ENCODE measurements at regions of chr1 and their contacts with region 1.

Region 1: DNA sequence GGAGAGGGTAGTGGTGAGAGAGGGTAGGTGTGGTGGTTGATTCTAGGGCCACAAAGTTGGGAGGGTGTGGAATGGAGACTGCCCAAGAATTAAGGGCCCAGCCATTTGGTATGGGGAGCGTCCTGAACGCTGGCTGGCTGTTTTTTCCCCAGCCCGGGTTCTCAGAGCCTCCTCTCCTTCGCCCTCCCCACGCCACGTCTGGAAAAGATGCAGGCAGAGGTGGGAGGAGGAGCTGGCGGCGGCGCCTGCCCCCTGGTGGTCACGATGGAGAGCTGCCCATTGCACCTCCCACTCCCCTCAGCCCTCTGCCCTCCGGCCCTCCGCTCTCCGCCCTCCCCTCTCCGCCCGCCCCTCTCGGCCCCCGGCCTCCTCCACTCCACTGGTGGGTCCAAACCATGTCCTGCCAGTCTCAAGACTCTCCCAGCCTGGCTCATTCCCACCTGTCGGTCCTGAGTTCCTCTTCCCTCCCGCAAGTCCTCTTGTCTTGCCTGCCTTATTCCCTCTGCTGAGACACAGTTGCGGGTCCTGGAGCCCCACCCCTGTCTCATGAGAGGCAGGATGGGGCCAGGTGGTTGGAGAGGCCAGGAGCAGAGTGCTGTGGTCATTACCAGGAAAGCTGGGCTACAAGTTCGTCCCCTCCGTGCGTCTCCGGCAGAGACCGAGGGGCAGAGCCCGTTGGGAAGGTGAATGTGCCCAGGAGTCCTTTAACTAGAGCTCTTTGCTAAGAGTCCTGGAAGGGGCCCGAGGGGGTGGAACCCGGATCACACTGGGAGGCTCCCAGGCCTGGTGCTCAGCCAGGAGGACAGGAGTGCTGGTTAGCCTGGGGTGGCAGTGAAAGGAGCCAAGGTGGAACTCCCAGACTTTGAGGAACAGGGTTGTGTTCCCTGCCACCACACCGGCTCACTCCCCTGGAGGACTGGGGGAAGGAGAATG is 22.6 kb downstream of the ETNK2 start:
- DNase-seq: peak; percentile 31
- H3K4me3 ChIP-seq: peak overlapping the region; percentile 18 to 45 (median 31)
- H3K27ac ChIP-seq: no peak overlapping the region
- H3K4me1 ChIP-seq: peaks cover 35% of the 10 kb centered on the region
- H3K27me3 ChIP-seq: no peaks in the 10 kb centered on the region
- CTCF ChIP-seq: peak; percentile 66 to 87

Region 2: GRCh38 chr1:203861379-203862184 is 267.6 kb before region 1 on chr1 and contains the start of gene SNRPE:
- CTCF ChIA-PET with region 1: interaction called, 19 read pairs
- dilution Hi-C with region 1: no loop called
- in situ Hi-C with region 1: no loop called
- intact Hi-C with region 1: loop called (anchors 1 kb)
- DNase-seq: peak; percentile 97
- H3K4me3 ChIP-seq: peak within 1 kb of the TSS; percentile 59 to 92 (median 74)
- H3K27ac ChIP-seq: peak within 1 kb of the TSS; percentile 82
- H3K4me1 ChIP-seq: peaks cover 22% of the 10 kb centered on the region
- H3K27me3 ChIP-seq: no peaks in the 10 kb centered on the region
- CTCF ChIP-seq: peak; percentile 80 to 94
- total RNA-seq, gene SNRPE: 21.7 to 131 TPM

Region 3: DNA sequence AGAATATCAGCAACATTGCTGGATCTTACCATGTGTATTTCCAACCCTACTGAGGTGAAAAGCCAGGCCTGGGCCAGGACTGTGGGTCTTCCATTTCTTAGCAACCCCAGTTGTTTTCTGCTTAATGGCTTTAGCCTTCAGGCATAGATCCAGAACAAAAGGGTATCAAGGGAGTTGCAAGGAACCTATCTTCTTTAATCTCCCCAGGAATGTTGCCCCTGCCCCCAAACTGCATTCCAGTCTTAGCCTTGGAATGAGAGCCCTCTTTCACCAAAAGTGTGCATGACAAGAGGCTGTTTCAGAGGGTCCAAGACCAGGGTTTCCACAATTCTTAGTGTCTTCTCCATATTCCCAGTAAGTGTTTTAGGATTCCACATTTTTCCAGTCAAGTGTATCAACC is 144.2 kb before region 1 on chr1:
- CTCF ChIA-PET with region 1: no interaction called
- dilution Hi-C with region 1: no loop called
- in situ Hi-C with region 1: no loop called
- intact Hi-C with region 1: loop called (anchors 5 kb)
- DNase-seq: no peak
- H3K4me3 ChIP-seq: no peak overlapping the region
- H3K27ac ChIP-seq: no peak overlapping the region
- H3K4me1 ChIP-seq: no peaks in the 10 kb centered on the region
- H3K27me3 ChIP-seq: no peaks in the 10 kb centered on the region
- CTCF ChIP-seq: no peak

Region 4: GRCh38 chr1:204150702-204151551 is 21.7 kb after region 1 on chr1:
- CTCF ChIA-PET with region 1: interaction called, 12 read pairs
- dilution Hi-C with region 1: no loop called
- in situ Hi-C with region 1: no loop called
- intact Hi-C with region 1: no loop called
- DNase-seq: no peak
- H3K4me3 ChIP-seq: peak overlapping the region; percentile 44 to 68 (median 57)
- H3K27ac ChIP-seq: no peak overlapping the region
- H3K4me1 ChIP-seq: peaks cover 18% of the 10 kb centered on the region
- H3K27me3 ChIP-seq: no peaks in the 10 kb centered on the region
- CTCF ChIP-seq: no peak

Measured in mammary epithelial cell (primary cell).